A673 (cell line): ENCODE measurements at regions of chr19 and their contacts with region 1.

Region 1: GRCh38 chr19:38250821-38251563 is 5.2 kb downstream of the PPP1R14A start:
- DNase-seq: no peak
- H3K4me3 ChIP-seq: no peak overlapping the region
- H3K27ac ChIP-seq: no peak overlapping the region
- H3K4me1 ChIP-seq: peaks cover 20% of the 10 kb centered on the region
- H3K27me3 ChIP-seq: no peaks in the 10 kb centered on the region
- CTCF ChIP-seq: no peak

Region 2: GRCh38 chr19:37136111-37136510 is 1114.9 kb before region 1 on chr19:
- CTCF ChIA-PET with region 1: no interaction called
- POLR2A ChIA-PET with region 1: no interaction called
- intact Hi-C with region 1: no loop called
- DNase-seq: no peak
- H3K4me3 ChIP-seq: no peak overlapping the region
- H3K27ac ChIP-seq: no peak overlapping the region
- H3K4me1 ChIP-seq: no peaks in the 10 kb centered on the region
- H3K27me3 ChIP-seq: no peaks in the 10 kb centered on the region
- CTCF ChIP-seq: no peak

Region 3: GRCh38 chr19:38304866-38305429 is 54.0 kb after region 1 on chr19:
- CTCF ChIA-PET with region 1: no interaction called
- POLR2A ChIA-PET with region 1: no interaction called
- intact Hi-C with region 1: no loop called
- DNase-seq: no peak
- H3K4me3 ChIP-seq: no peak overlapping the region
- H3K27ac ChIP-seq: no peak overlapping the region
- H3K4me1 ChIP-seq: no peaks in the 10 kb centered on the region
- H3K27me3 ChIP-seq: no peaks in the 10 kb centered on the region
- CTCF ChIP-seq: no peak

Region 4: GRCh38 chr19:38367041-38367440 is 116.0 kb after region 1 on chr19:
- CTCF ChIA-PET with region 1: no interaction called
- POLR2A ChIA-PET with region 1: interaction called, 13 read pairs
- intact Hi-C with region 1: no loop called
- DNase-seq: no peak
- H3K4me3 ChIP-seq: no peak overlapping the region
- H3K27ac ChIP-seq: no peak overlapping the region
- H3K4me1 ChIP-seq: no peaks in the 10 kb centered on the region
- H3K27me3 ChIP-seq: no peaks in the 10 kb centered on the region
- CTCF ChIP-seq: no peak